ENCODE measurements at regions of chrX and their contacts with region 1.

Region 1: GRCh38 chrX:102085706-102086105 is 39.8 kb upstream of the TCEAL2 start:
- DNase-seq: no peak
- H3K4me3 Mint-ChIP-seq: no peak overlapping the region
- H3K27ac Mint-ChIP-seq: no peak overlapping the region
- H3K4me1 Mint-ChIP-seq: no peaks in the 10 kb centered on the region
- H3K27me3 Mint-ChIP-seq: peaks cover 8% of the 10 kb centered on the region

Region 2: GRCh38 chrX:101595739-101596419 is 489.8 kb before region 1 on chrX:
- CTCF ChIA-PET with region 1: no interaction called
- POLR2A ChIA-PET with region 1: no interaction called
- intact Hi-C with region 1: loop called (anchors 5 kb)
- DNase-seq: no peak
- H3K4me3 Mint-ChIP-seq: no peak overlapping the region
- H3K27ac Mint-ChIP-seq: no peak overlapping the region
- H3K4me1 Mint-ChIP-seq: no peaks in the 10 kb centered on the region
- H3K27me3 Mint-ChIP-seq: peaks cover 6% of the 10 kb centered on the region

Region 3: GRCh38 chrX:101973066-101973465 is 112.6 kb before region 1 on chrX:
- CTCF ChIA-PET with region 1: no interaction called
- POLR2A ChIA-PET with region 1: no interaction called
- intact Hi-C with region 1: no loop called
- DNase-seq: no peak
- H3K4me3 Mint-ChIP-seq: no peak overlapping the region
- H3K27ac Mint-ChIP-seq: no peak overlapping the region
- H3K4me1 Mint-ChIP-seq: no peaks in the 10 kb centered on the region
- H3K27me3 Mint-ChIP-seq: peaks cover 3% of the 10 kb centered on the region

Region 4: DNA sequence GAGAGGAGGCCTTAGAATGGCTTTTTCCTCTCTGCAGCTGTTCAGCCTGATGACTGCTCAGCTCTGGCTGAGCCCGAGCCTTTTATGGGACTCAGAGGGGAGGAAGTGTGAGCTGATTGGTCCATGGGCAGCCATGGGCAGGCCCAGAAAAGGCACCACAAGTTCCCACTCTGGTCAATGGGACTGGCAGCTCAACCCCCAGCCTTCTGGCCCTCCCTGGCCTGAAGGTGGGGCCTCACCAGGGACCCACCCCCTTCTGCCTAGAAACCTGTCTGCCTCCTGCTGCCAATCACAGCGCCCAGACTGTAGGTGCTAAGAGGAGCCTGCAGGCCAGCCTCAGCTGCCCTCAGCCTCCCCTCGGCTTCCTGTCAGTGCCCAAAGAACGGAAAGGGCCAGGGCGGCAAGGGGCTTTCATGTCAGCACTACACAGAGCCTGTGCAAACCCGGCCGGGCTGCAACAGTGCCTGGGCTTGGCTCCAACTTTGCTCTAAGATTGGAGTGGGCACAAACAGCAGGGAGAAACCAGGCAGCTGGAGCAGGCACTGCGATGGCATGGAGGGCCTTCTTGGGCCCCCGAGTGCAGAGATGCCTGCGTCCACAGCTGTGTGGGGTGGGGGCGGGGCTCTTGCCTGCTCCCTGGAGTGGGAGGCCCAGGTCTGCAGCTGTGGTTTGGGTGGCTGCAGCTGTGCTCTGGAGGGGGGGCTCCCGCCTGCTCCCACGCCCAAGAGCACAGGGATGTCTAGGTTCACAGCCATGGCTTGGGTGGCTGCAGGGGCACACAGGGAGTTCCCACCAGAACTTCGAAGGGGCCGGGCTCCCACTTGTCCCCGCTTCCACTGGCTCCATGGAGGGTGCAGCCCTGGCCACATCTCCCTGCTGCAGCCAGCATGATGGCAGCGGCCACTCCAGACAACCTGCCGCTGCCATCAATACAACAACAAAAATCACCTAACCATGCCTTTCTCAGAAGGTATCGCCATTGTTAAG is 253.9 kb after region 1 on chrX:
- CTCF ChIA-PET with region 1: no interaction called
- POLR2A ChIA-PET with region 1: no interaction called
- intact Hi-C with region 1: no loop called
- DNase-seq: peak; percentile 17
- H3K4me3 Mint-ChIP-seq: no peak overlapping the region
- H3K27ac Mint-ChIP-seq: no peak overlapping the region
- H3K4me1 Mint-ChIP-seq: no peaks in the 10 kb centered on the region
- H3K27me3 Mint-ChIP-seq: no peaks in the 10 kb centered on the region